ENCODE measurements at regions of chrX and their contacts with region 1.

Region 1: GRCh38 chrX:47482512-47483309 is at the start of gene ZNF41:
- DNase-seq: peak; percentile 69 to 84 (median 78)
- ATAC-seq: peak; percentile 85 to 95 (median 94)
- H3K4me3 ChIP-seq: peak within 1 kb of the TSS; percentile 45 to 99 (median 83)
- H3K27ac ChIP-seq: peak within 1 kb of the TSS; percentile 93 to 100 (median 98)
- H3K4me1 ChIP-seq: peaks cover 0 to 26% (median 2%) of the 10 kb centered on the region in 12 donors
- H3K27me3 ChIP-seq: no peaks in the 10 kb centered on the region
- CTCF ChIP-seq: no peak
- POLR2A ChIP-seq: peak in 1 of 2 donors; percentile 42
- total RNA-seq, gene ZNF41: 10.3 to 19.6 (median 13.1) TPM

Region 2: DNA sequence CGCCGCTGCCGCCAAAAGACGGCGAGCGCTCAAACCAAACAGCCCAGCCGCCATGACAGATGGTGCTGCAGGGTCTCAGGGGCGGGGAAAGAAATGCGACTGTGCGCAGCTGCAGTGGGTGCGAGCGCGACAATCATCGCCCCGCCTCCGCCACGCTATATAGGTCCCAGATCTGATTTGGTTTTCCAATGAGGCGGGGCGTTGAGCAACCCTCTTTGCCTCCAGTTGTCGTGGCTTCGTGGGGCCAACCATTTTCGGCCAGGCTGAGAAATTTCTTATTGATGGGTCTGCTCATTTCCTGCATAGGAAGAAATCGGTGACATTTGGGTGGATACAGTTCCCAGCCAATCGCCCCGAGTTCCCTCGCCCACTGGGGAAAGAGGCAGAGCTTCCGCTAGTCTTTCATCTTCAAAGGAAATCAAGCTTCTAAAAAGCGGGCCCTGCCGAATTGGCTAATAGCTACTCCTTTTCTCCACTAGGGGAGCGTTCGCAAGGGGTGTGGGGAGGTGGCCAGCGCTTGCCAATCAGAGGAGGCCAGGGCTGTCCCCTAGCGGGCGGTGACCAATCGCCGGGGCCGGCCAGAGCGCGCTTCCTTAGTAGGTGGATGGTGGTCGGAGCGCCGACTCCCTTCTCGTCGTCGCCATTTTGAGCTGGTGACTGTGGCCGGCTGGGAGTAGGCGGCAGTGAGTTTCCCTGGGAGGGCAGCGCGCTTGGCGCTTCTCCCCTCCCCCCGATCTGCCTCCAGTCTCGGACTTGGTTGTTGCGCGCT is 337.9 kb before region 1 on chrX and contains the starts of genes NDUFB11 and RBM10:
- intact Hi-C with region 1: loop called in 1 of 10 experiments (anchors 5 kb)
- DNase-seq: peak; percentile 93 to 96 (median 95)
- ATAC-seq: peak; percentile 96 to 99 (median 98)
- H3K4me3 ChIP-seq: peak within 1 kb of the TSS; percentile 42 to 98 (median 73)
- H3K27ac ChIP-seq: peak within 1 kb of the TSS; percentile 89 to 98 (median 94)
- H3K4me1 ChIP-seq: peaks cover 0 to 32% (median 16%) of the 10 kb centered on the region in 12 donors
- H3K27me3 ChIP-seq: peaks cover 0 to 19% (median 0%) of the 10 kb centered on the region in 9 donors
- CTCF ChIP-seq: peak; percentile 53 to 78 (median 68)
- POLR2A ChIP-seq: peak in 1 of 2 donors; percentile 44
- total RNA-seq, gene NDUFB11: 133 to 217 (median 173) TPM
- total RNA-seq, gene RBM10: 17.5 to 44.6 (median 28.3) TPM